Activated CD4-positive, alpha-beta memory T cell treated with anti-CD3 and anti-CD28 coated beads, Interleukin-2, amount 10 ng/mL, durations not matched to agents 7 days and 5 days (primary cell): ENCODE measurements at regions of chr5 and their contacts with region 1.

Region 1: DNA sequence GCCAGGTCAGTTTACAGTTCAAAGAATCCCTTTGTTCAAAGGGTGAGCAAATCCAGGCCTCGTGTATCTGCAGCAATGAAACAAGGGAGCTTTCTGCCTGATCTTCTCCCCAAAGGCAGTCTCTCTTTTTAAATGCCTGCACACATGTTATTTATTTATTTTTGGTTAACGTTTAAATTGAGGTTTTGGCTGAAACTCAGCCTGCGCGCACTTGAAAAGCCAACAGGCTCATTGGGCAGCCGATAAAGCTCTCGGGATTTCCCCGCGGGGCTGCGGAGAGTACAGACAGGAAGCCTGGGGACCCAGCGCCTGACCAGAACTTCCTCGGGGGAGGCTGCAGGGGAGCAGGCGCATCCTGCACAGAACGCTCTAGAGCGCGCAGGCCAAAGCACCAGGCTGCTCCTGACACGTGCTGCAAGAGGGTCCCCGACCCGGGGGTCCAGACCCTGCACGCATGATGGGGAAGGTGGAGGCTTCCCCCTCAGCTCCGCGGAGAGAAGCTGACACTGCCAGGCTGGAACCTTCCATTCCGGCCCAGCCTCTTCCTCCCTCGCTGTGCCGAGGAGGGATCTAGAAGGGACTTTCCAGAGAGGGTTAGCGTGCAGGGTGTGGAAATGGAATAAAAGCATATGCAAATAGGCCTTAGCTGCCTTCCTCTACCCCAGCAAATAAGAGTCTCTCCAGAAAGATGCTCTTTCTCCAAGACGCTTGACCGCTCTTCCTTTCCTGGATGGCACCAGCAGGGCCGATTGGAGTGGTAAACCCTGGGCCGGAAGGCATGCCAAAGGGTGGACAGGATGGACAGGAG is 46.1 kb downstream of the PTTG1 start:
- DNase-seq: peak; percentile 89
- H3K4me3 Mint-ChIP-seq: peak overlapping the region; percentile 99
- H3K27ac Mint-ChIP-seq: peak overlapping the region; percentile 99
- H3K4me1 Mint-ChIP-seq: peaks cover 71% of the 10 kb centered on the region
- H3K27me3 Mint-ChIP-seq: no peaks in the 10 kb centered on the region

Region 2: DNA sequence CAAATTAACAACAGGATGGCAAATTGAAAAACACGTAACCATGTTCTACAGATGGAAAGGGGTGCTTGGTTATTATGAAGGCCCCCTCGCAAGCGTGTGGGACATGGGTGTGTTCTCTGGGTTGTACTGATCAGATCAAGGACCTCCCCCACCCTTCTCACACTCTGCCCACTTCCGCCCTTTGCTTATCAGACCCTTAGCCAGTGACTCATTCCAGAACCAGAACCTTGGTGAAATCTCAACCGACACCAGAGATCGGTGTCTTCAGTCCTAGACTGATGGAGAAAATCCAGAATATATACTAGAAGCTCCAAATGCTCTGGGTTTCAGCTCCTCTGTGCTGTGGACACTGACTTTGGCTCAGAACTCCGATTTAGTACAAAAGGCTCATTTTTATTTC is 18.8 kb after region 1 on chr5:
- CTCF ChIA-PET with region 1: interaction called, 6 read pairs
- POLR2A ChIA-PET with region 1: interaction called, 135 read pairs
- DNase-seq: peak; percentile 80
- H3K4me3 Mint-ChIP-seq: peak overlapping the region; percentile 25
- H3K27ac Mint-ChIP-seq: peak overlapping the region; percentile 83
- H3K4me1 Mint-ChIP-seq: peaks cover 69% of the 10 kb centered on the region
- H3K27me3 Mint-ChIP-seq: no peaks in the 10 kb centered on the region

Region 3: GRCh38 chr5:160508780-160509361 is 41.1 kb after region 1 on chr5:
- CTCF ChIA-PET with region 1: interaction called, 33 read pairs
- POLR2A ChIA-PET with region 1: interaction called, 32 read pairs
- DNase-seq: peak; percentile 75
- H3K4me3 Mint-ChIP-seq: no peak overlapping the region
- H3K27ac Mint-ChIP-seq: peak overlapping the region; percentile 24
- H3K4me1 Mint-ChIP-seq: peaks cover 51% of the 10 kb centered on the region
- H3K27me3 Mint-ChIP-seq: peaks cover 9% of the 10 kb centered on the region